GM12878 (cell line): ENCODE measurements at regions of chr12 and their contacts with region 1.

Region 1: DNA sequence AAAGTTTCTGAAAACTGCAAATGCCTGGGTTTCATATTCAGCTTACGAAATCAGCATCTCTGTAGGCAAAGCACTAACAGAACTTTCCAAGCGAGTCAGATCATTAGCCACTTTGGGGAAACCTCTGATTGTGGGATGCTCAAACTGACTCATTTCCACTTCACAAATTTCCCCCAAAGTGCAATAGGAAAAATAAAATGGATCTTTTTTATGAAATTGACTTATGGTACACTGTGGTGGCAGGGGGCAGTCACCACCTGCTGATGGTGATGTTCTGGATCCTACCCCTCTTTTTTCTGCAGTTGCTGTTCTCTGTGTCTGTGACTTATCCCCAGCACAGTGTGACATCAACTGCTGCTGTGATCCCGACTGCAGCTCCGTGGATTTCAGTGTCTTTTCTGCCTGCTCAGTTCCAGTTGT is 5.6 kb downstream of the TCTN1 start:
- DNase-seq: peak; percentile 80
- ATAC-seq: peak; percentile 91
- H3K4me3 ChIP-seq: peak overlapping the region; percentile 75
- H3K27ac ChIP-seq: peak overlapping the region; percentile 61
- H3K4me1 ChIP-seq: peaks cover 25% of the 10 kb centered on the region
- H3K27me3 ChIP-seq: no peaks in the 10 kb centered on the region
- CTCF ChIP-seq: peak; percentile 40 to 81 (median 46); a peak in 5 of 6 replicates
- EP300 ChIP-seq: peak; percentile 60 to 94
- POLR2A ChIP-seq: no peak
- RAD21 ChIP-seq: peak; percentile 76

Region 2: DNA sequence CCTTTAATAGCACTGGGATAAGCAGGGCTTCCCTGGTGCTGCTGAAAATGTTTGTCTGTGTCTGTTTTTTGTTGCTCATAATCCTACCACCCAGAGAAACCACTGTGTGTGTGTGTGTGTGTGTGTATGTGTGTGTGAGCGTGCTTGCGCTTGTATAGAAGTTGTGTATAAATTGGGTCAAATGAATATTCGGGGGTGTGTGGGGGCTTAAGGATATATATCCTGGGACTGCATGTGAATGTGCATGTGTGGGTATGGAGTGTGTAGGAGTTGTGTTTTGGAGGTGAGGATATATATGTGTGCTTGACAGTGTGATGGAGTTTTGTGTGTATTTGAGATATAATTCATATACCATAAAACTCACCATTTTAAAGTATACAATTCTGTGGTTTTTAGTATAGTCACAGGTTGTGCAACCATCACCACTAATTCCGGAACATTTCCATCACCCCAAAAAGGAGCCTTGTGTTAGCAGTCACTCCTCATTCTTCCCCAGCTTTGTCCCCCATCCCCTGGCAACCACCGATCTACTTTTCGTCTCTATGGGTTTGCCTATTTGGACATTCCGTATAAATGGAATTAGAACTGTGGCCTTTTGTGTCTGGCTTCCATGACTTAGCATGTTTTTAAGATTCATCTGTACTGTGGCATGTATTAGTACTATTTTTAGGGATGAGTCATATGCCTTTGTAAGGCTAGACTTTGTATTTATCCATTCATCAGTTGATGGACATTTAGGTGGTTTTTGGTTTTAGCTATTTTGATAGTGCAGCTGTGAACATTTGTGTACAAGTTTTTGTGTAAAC is 20.0 kb after region 1 on chr12:
- CTCF ChIA-PET with region 1: interaction called, 46 read pairs
- POLR2A ChIA-PET with region 1: interaction called, 46 read pairs
- RAD21 ChIA-PET with region 1: interaction called, 23 read pairs
- SMC1A ChIA-PET with region 1: interaction called, 103 read pairs
- in situ Hi-C with region 1: no loop called
- intact Hi-C with region 1: no loop called
- DNase-seq: no peak
- ATAC-seq: peak; percentile 67
- H3K4me3 ChIP-seq: no peak overlapping the region
- H3K27ac ChIP-seq: no peak overlapping the region
- H3K4me1 ChIP-seq: peaks cover 61% of the 10 kb centered on the region
- H3K27me3 ChIP-seq: no peaks in the 10 kb centered on the region
- CTCF ChIP-seq: no peak
- EP300 ChIP-seq: no peak
- POLR2A ChIP-seq: no peak
- RAD21 ChIP-seq: no peak

Region 3: GRCh38 chr12:110661337-110661972 is 41.9 kb after region 1 on chr12:
- CTCF ChIA-PET with region 1: interaction called, 24 read pairs
- POLR2A ChIA-PET with region 1: interaction called, 6 read pairs
- RAD21 ChIA-PET with region 1: interaction called, 22 read pairs
- SMC1A ChIA-PET with region 1: interaction called, 49 read pairs
- in situ Hi-C with region 1: no loop called
- intact Hi-C with region 1: no loop called
- DNase-seq: peak; percentile 92
- ATAC-seq: peak; percentile 95
- H3K4me3 ChIP-seq: peak overlapping the region; percentile 65
- H3K27ac ChIP-seq: peak overlapping the region; percentile 88
- H3K4me1 ChIP-seq: peaks cover 44% of the 10 kb centered on the region
- H3K27me3 ChIP-seq: no peaks in the 10 kb centered on the region
- CTCF ChIP-seq: no peak
- EP300 ChIP-seq: peak; percentile 90 to 97
- POLR2A ChIP-seq: peak; percentile 82
- RAD21 ChIP-seq: peak; percentile 18; the same call in 1 of the 2 replicates

Region 4: GRCh38 chr12:110677206-110677911 is 57.8 kb after region 1 on chr12:
- CTCF ChIA-PET with region 1: interaction called, 3 read pairs
- POLR2A ChIA-PET with region 1: interaction called, 22 read pairs
- RAD21 ChIA-PET with region 1: interaction called, 28 read pairs
- SMC1A ChIA-PET with region 1: interaction called, 14 read pairs
- in situ Hi-C with region 1: no loop called
- intact Hi-C with region 1: no loop called
- DNase-seq: peak; percentile 97
- ATAC-seq: peak; percentile 89
- H3K4me3 ChIP-seq: peak overlapping the region; percentile 42
- H3K27ac ChIP-seq: peak overlapping the region; percentile 87
- H3K4me1 ChIP-seq: peaks cover 72% of the 10 kb centered on the region
- H3K27me3 ChIP-seq: no peaks in the 10 kb centered on the region
- CTCF ChIP-seq: no peak
- EP300 ChIP-seq: peak; percentile 50 to 81; a peak in 3 of 4 replicates
- POLR2A ChIP-seq: 0 out of 2 replicates have a peak, but pooled peaks have one; percentile 38
- RAD21 ChIP-seq: no peak

Region 5: GRCh38 chr12:110698171-110698902 is 78.8 kb after region 1 on chr12:
- CTCF ChIA-PET with region 1: interaction called, 43 read pairs
- POLR2A ChIA-PET with region 1: interaction called, 12 read pairs
- RAD21 ChIA-PET with region 1: interaction called, 22 read pairs
- SMC1A ChIA-PET with region 1: interaction called, 55 read pairs
- in situ Hi-C with region 1: loop called (anchors 5 kb)
- intact Hi-C with region 1: loop called (anchors 1 kb)
- DNase-seq: peak; percentile 90
- ATAC-seq: peak; percentile 99
- H3K4me3 ChIP-seq: no peak overlapping the region
- H3K27ac ChIP-seq: peak overlapping the region; percentile 64
- H3K4me1 ChIP-seq: peaks cover 29% of the 10 kb centered on the region
- H3K27me3 ChIP-seq: no peaks in the 10 kb centered on the region
- CTCF ChIP-seq: peak; percentile 88 to 90 (median 89)
- EP300 ChIP-seq: no peak
- POLR2A ChIP-seq: no peak
- RAD21 ChIP-seq: peak; percentile 92

Region 6: GRCh38 chr12:110826592-110827200 is 207.2 kb after region 1 on chr12:
- CTCF ChIA-PET with region 1: interaction called, 16 read pairs
- POLR2A ChIA-PET with region 1: no interaction called
- RAD21 ChIA-PET with region 1: interaction called, 3 read pairs
- SMC1A ChIA-PET with region 1: interaction called, 6 read pairs
- in situ Hi-C with region 1: loop called (anchors 5 kb)
- intact Hi-C with region 1: loop called (anchors 2 kb)
- DNase-seq: peak; percentile 70
- ATAC-seq: peak; percentile 99
- H3K4me3 ChIP-seq: no peak overlapping the region
- H3K27ac ChIP-seq: no peak overlapping the region
- H3K4me1 ChIP-seq: peaks cover 10% of the 10 kb centered on the region; the same call in 1 of the 2 replicates
- H3K27me3 ChIP-seq: no peaks in the 10 kb centered on the region
- CTCF ChIP-seq: peak; percentile 89 to 99 (median 97)
- EP300 ChIP-seq: no peak
- POLR2A ChIP-seq: no peak
- RAD21 ChIP-seq: peak; percentile 98

Region 7: GRCh38 chr12:110896559-110896958 is 277.0 kb after region 1 on chr12:
- CTCF ChIA-PET with region 1: no interaction called
- POLR2A ChIA-PET with region 1: no interaction called
- RAD21 ChIA-PET with region 1: no interaction called
- SMC1A ChIA-PET with region 1: no interaction called
- in situ Hi-C with region 1: no loop called
- intact Hi-C with region 1: no loop called
- DNase-seq: no peak
- ATAC-seq: no peak
- H3K4me3 ChIP-seq: no peak overlapping the region
- H3K27ac ChIP-seq: no peak overlapping the region
- H3K4me1 ChIP-seq: no peaks in the 10 kb centered on the region
- H3K27me3 ChIP-seq: no peaks in the 10 kb centered on the region; a peak in 1 of 4 replicates
- CTCF ChIP-seq: no peak
- EP300 ChIP-seq: no peak
- POLR2A ChIP-seq: no peak
- RAD21 ChIP-seq: no peak